Activated T-helper 2 cell treated with anti-CD3 and anti-CD28 coated beads, Interferon-gamma antibody, Interleukin-2, Interleukin-4, amounts not matched to agents 10 μg/mL and 5 μg/mL and 100 μg/mL, durations not matched to agents 14 hours and 24 hours and 36 hours (primary cell): ENCODE measurements at regions of chr16 and their contacts with region 1.

Region 1: DNA sequence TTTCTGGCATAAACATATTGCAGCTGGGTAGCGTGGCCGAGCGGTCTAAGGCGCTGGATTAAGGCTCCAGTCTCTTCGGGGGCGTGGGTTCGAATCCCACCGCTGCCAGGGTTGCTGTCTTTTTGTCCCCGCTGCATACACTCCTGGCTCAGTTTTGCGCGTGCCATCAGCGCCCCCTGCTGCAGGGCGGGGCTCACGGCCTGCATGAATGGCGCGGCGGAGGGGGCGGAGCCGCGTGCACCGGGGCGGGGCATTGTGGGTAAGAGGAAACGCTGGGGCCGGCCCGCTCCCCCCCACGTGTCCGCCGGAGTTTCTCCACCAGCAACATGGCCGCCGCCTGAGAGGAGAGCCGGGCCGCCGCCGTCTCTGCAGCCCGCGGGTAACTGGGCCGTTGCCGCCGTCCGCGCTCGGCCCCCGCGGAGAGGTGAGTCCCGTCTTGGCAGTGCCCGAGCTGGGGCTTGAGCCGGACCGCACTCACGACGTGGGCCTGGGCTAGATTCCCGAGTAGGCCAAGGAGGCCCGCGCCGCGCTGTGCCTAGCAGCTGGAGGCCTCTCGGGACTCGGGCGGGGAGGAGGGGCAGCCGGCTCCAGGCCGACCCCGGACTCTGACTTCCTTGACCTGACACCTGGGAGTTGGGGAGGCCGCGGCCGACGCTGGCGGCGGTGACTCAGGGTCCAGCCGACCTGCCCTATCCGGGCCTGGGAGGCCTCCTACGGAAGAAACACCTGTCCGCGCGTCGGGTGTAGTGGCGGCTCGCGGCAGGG is at the start of gene POLR3E:
- DNase-seq: peak; percentile 100
- H3K4me3 Mint-ChIP-seq: peak within 1 kb of the TSS; percentile 92
- H3K27ac Mint-ChIP-seq: peak within 1 kb of the TSS; percentile 98
- H3K4me1 Mint-ChIP-seq: peaks cover 26% of the 10 kb centered on the region
- H3K27me3 Mint-ChIP-seq: no peaks in the 10 kb centered on the region
- total RNA-seq, gene POLR3E: 100 and 106 TPM in 2 replicates

Region 2: GRCh38 chr16:21952793-21953540 is 344.3 kb before region 1 on chr16 and contains the start of gene UQCRC2:
- intact Hi-C with region 1: loop called (anchors 2 kb)
- DNase-seq: peak; percentile 85
- H3K4me3 Mint-ChIP-seq: peak within 1 kb of the TSS; percentile 96
- H3K27ac Mint-ChIP-seq: peak within 1 kb of the TSS; percentile 97
- H3K4me1 Mint-ChIP-seq: peaks cover 38% of the 10 kb centered on the region
- H3K27me3 Mint-ChIP-seq: no peaks in the 10 kb centered on the region
- total RNA-seq, gene UQCRC2: 269 and 272 TPM in 2 replicates

Region 3: GRCh38 chr16:22007509-22008214 is 289.6 kb before region 1 on chr16 and contains the start of gene MOSMO:
- intact Hi-C with region 1: loop called (anchors 5 kb)
- DNase-seq: peak; percentile 46
- H3K4me3 Mint-ChIP-seq: peak within 1 kb of the TSS; percentile 89
- H3K27ac Mint-ChIP-seq: peak within 1 kb of the TSS; percentile 69
- H3K4me1 Mint-ChIP-seq: peaks cover 32% of the 10 kb centered on the region
- H3K27me3 Mint-ChIP-seq: peaks cover 14% of the 10 kb centered on the region
- total RNA-seq, gene MOSMO: 11.4 and 12.0 TPM in 2 replicates

Region 4: GRCh38 chr16:22206013-22206841 is 91.1 kb before region 1 on chr16 and contains the start of gene EEF2K:
- intact Hi-C with region 1: loop called (anchors 1 kb)
- DNase-seq: peak; percentile 76
- H3K4me3 Mint-ChIP-seq: peak within 1 kb of the TSS; percentile 96
- H3K27ac Mint-ChIP-seq: peak within 1 kb of the TSS; percentile 91
- H3K4me1 Mint-ChIP-seq: peaks cover 41% of the 10 kb centered on the region
- H3K27me3 Mint-ChIP-seq: no peaks in the 10 kb centered on the region
- total RNA-seq, gene EEF2K: 40.4 and 41.0 TPM in 2 replicates

Region 5: GRCh38 chr16:22240023-22240710 is 57.1 kb before region 1 on chr16:
- intact Hi-C with region 1: loop called (anchors 2 kb)
- DNase-seq: no peak
- H3K4me3 Mint-ChIP-seq: no peak overlapping the region
- H3K27ac Mint-ChIP-seq: peak overlapping the region; percentile 90
- H3K4me1 Mint-ChIP-seq: peaks cover 23% of the 10 kb centered on the region
- H3K27me3 Mint-ChIP-seq: no peaks in the 10 kb centered on the region

Region 6: GRCh38 chr16:23952128-23952970 is 1655.1 kb after region 1 on chr16:
- intact Hi-C with region 1: loop called (anchors 10 kb)
- DNase-seq: no peak
- H3K4me3 Mint-ChIP-seq: no peak overlapping the region
- H3K27ac Mint-ChIP-seq: peak overlapping the region; percentile 43
- H3K4me1 Mint-ChIP-seq: peaks cover 64% of the 10 kb centered on the region
- H3K27me3 Mint-ChIP-seq: no peaks in the 10 kb centered on the region